ENCODE measurements at regions of chr19 and their contacts with region 1.

Region 1: DNA sequence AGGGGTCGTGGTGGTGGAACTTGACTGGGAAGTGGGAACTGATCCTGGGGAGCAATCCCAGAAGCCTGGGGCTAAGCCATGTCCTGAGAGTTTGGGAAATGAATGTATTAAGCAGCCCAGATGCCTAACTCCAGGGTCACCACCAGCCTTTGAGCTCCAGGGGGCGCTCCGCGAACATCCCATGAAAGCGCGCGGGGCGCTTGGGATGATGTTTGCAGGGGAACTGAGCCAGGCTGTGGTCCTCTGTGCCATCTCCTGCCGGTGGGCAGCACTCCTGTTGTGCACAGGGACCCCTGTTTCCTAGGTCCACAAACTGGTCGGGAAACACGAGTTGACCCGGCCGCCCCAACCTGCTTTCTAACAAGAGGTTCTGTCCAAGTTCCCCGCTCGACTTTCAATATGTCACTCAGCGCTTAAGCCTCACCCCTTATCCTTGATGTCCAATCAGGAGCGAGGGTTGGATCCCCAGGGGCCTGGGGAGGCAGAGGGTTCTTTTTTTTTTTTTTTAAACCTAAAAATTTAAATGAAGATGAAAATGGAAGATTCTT is 14.4 kb downstream of the LEUTX start:
- DNase-seq: peak; percentile 54
- ATAC-seq: peak; percentile 97
- H3K4me3 ChIP-seq: peak overlapping the region; percentile 17 to 57 (median 34); a peak in 3 of 6 replicates
- H3K27ac ChIP-seq: no peak overlapping the region
- H3K4me1 ChIP-seq: no peaks in the 10 kb centered on the region
- H3K27me3 ChIP-seq: no peaks in the 10 kb centered on the region; a peak in 1 of 5 replicates
- CTCF ChIP-seq: peak; percentile 93
- EP300 ChIP-seq: no peak
- POLR2A ChIP-seq: no peak
- RAD21 ChIP-seq: peak; percentile 87

Region 2: GRCh38 chr19:39765091-39766076 is 27.7 kb before region 1 on chr19:
- CTCF ChIA-PET with region 1: no interaction called
- POLR2A ChIA-PET with region 1: no interaction called
- in situ Hi-C with region 1: no loop called
- intact Hi-C with region 1: loop called (anchors 2 kb)
- DNase-seq: peak; percentile 48
- ATAC-seq: no peak; the same call in 2 of the 3 replicates
- H3K4me3 ChIP-seq: no peak overlapping the region
- H3K27ac ChIP-seq: no peak overlapping the region
- H3K4me1 ChIP-seq: no peaks in the 10 kb centered on the region
- H3K27me3 ChIP-seq: peaks cover under 1 to 1% of the 10 kb centered on the region in 2 experiments; a peak in 4 of 5 replicates
- CTCF ChIP-seq: peak; percentile 56
- EP300 ChIP-seq: no peak
- POLR2A ChIP-seq: no peak
- RAD21 ChIP-seq: no peak

Region 3: GRCh38 chr19:39846176-39846677 is 53.2 kb after region 1 on chr19 and contains the start of gene FBL:
- CTCF ChIA-PET with region 1: interaction called, 10 read pairs
- POLR2A ChIA-PET with region 1: no interaction called
- in situ Hi-C with region 1: loop called (anchors 5 kb)
- intact Hi-C with region 1: loop called (anchors 1 kb)
- DNase-seq: peak; percentile 84
- ATAC-seq: peak; percentile 88
- H3K4me3 ChIP-seq: peak within 1 kb of the TSS; percentile 69 to 86 (median 84)
- H3K27ac ChIP-seq: peak within 1 kb of the TSS; percentile 74
- H3K4me1 ChIP-seq: peaks cover 68% of the 10 kb centered on the region
- H3K27me3 ChIP-seq: no peaks in the 10 kb centered on the region; a peak in 1 of 5 replicates
- CTCF ChIP-seq: no peak
- EP300 ChIP-seq: no peak
- POLR2A ChIP-seq: peak; percentile 48 to 96
- RAD21 ChIP-seq: no peak
- total RNA-seq, gene FBL: 153 and 235 TPM in 2 replicates